ENCODE measurements at regions of chr11 and their contacts with region 1.

Region 1: DNA sequence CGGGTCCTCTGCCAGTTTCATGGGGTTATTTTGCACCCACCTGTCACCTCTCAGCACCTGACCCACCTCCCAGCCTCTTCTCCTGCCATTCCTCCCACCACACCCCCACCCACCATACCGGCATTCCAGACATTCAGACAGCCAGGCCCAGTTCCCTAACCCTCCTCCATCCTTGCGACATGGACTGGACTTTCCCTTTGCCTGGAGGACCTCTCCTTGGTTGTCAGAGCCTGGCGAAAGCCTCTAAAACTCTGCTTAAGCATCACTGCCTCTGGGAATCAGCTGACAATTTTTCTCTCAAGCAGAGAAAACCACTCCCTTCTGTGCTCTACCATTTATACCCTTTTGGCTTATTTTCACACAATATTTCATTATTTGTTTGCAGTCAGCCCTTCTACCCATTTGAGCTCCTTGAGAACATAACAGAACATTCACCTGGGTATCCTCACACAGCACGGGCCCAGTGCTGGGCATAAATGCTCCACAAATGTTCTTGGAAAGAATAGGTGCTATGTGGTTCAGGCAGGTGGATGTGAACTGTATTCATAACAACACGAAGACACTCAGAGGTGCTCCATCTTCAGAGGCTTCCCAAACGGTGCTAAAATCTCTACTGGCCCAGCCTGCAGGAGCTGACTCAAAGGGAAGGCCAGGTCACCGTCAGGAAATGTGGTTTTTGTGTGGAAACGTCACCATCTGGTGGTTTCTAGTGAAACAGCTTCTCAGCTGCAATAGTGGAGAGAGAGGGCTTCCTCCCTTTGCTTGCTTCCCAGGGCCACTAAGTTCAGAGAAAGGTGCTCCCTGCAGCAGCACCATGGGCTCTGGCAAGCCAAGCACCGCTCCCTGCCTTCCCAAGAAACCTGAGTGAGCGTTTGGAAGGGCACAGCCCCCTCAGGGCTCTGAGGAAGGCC is 10.4 kb downstream of the SPATA19 start:
- DNase-seq: peak in 1 of 2 donors; percentile 74
- H3K4me3 ChIP-seq: no peak overlapping the region
- CTCF ChIP-seq: no peak
- POLR2A ChIP-seq: no peak

Region 2: DNA sequence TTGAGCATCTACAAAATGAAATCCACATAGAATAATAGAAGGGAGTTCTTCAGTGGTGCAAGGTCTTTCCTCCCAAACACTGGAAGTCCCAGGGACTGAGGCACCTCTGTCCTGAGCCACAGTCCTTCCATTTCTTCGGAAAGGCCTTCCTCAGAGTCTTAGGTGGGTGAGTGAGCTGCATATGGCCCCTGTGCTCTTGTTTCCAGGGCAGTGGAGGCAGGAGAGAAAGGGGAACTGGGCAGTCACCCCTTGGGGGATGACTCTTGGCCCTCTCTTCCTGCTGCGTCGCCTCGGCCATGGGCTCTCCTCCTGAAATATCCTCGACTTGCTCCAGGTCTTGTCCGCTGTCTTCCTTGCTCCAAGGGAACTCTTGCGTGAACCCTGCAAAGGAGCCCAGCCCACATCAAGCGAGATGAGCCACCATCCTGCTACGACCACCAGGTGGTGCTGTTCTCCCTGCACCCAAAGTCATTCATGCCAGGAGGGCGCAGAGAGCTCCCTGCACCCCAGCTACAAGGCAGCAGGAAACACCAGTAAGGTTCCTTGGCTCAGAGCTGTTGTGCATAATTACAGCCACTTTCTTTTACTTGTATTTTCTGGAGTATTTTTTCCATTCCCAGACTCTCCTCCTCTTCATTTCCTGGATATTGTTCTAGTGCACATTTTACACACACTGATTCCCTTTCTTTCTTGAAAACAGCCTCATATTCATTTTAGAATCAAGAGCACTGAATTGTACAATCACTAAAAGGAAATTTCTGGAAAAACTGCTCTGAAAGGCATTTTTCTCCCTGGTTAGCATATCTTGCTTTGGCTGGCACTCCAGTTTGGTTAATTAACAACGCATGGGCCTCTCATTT is 700.4 kb before region 1 on chr11:
- intact Hi-C with region 1: loop called (anchors 10 kb)
- DNase-seq: peak in 1 of 2 donors; percentile 15
- H3K4me3 ChIP-seq: no peak overlapping the region
- CTCF ChIP-seq: no peak
- POLR2A ChIP-seq: no peak

Measured in lower leg skin (tissue), 4 donors.